ENCODE measurements at regions of chr13 and their contacts with region 1.

Region 1: GRCh38 chr13:27251166-27252091 is at the start of gene RPL21:
- DNase-seq: peak; percentile 85 to 95 (median 93)
- ATAC-seq: peak; percentile 95
- H3K4me3 ChIP-seq: peak within 1 kb of the TSS; percentile 82
- H3K4me3 Mint-ChIP-seq: peak within 1 kb of the TSS; percentile 93 to 99 (median 98)
- H3K27ac ChIP-seq: peak within 1 kb of the TSS; percentile 98
- H3K27ac Mint-ChIP-seq: peak within 1 kb of the TSS; percentile 98 to 100 (median 99)
- H3K4me1 ChIP-seq: peaks cover 29 to 35% of the 10 kb centered on the region in 2 donors
- H3K4me1 Mint-ChIP-seq: peaks cover 32 to 78% (median 49%) of the 10 kb centered on the region in 7 donors
- H3K27me3 ChIP-seq: no peaks in the 10 kb centered on the region
- H3K27me3 Mint-ChIP-seq: no peaks in the 10 kb centered on the region
- total RNA-seq, gene RPL21: 962 to 2,668 (median 2,384) TPM

Region 2: DNA sequence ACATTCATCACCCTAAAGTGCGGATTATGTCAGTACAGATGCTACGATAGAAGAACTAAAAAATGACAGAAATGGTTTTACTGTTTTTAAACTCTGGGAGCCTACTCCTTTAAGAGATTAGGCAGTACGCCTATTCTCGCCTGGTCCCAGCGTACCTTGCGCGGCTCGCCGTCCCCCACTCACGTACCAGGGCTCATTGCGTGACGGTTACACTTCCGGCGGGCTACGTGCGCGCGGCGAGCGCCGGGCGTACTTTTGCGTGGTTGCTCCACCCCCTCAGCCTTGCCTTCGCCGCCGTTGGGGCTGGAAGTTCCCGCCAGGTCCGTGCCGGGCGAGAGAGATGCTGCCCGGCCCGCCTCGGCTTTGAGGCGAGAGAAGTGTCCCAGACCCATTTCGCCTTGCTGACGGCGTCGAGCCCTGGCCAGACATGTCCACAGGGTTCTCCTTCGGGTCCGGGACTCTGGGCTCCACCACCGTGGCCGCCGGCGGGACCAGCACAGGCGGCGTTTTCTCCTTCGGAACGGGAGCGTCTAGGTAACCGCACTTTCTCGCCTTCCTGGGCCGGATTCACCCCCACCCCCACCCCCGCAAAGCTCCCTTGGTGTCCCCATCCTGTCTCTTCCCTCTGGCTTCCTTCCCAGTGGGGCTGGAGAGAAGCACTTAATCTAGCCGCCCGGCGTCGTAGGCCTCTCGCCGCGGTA is 1949.9 kb before region 1 on chr13 and contains the start of gene NUP58:
- CTCF ChIA-PET with region 1: no interaction called
- POLR2A ChIA-PET with region 1: no interaction called
- intact Hi-C with region 1: loop called in 1 of 2 experiments (anchors 10 kb)
- DNase-seq: peak; percentile 83 to 94 (median 92)
- ATAC-seq: peak; percentile 99
- H3K4me3 ChIP-seq: peak within 1 kb of the TSS; percentile 64
- H3K4me3 Mint-ChIP-seq: peak within 1 kb of the TSS; percentile 86 to 95 (median 92)
- H3K27ac ChIP-seq: peak within 1 kb of the TSS; percentile 93
- H3K27ac Mint-ChIP-seq: peak within 1 kb of the TSS; percentile 87 to 97 (median 93)
- H3K4me1 ChIP-seq: peaks cover 13 to 22% of the 10 kb centered on the region in 2 donors
- H3K4me1 Mint-ChIP-seq: peaks cover 21 to 51% (median 47%) of the 10 kb centered on the region in 7 donors
- H3K27me3 ChIP-seq: peaks cover 0 to 5% of the 10 kb centered on the region in 2 donors
- H3K27me3 Mint-ChIP-seq: peaks cover 7 to 19% (median 10%) of the 10 kb centered on the region in 5 donors
- total RNA-seq, gene NUP58: 41.1 to 89.1 (median 57.0) TPM

Region 3: GRCh38 chr13:26985285-26985878 is 266.0 kb before region 1 on chr13:
- CTCF ChIA-PET with region 1: no interaction called
- POLR2A ChIA-PET with region 1: no interaction called
- intact Hi-C with region 1: loop called in 1 of 2 experiments (anchors 2 kb)
- DNase-seq: peak; percentile 17 to 76 (median 65)
- ATAC-seq: peak; percentile 83
- H3K4me3 ChIP-seq: no peak overlapping the region
- H3K4me3 Mint-ChIP-seq: no peak overlapping the region
- H3K27ac ChIP-seq: no peak overlapping the region
- H3K27ac Mint-ChIP-seq: peak overlapping the region in 1 of 9 donors; percentile 46
- H3K4me1 ChIP-seq: no peaks in the 10 kb centered on the region
- H3K4me1 Mint-ChIP-seq: peaks cover 0 to 10% (median 0%) of the 10 kb centered on the region in 7 donors
- H3K27me3 ChIP-seq: no peaks in the 10 kb centered on the region
- H3K27me3 Mint-ChIP-seq: peaks cover 3 to 17% (median 11%) of the 10 kb centered on the region in 5 donors

Region 4: GRCh38 chr13:27270594-27271520 is 19.4 kb after region 1 on chr13 and contains the start of gene RASL11A:
- CTCF ChIA-PET with region 1: interaction called, 5 read pairs
- POLR2A ChIA-PET with region 1: interaction called, 8 read pairs
- intact Hi-C with region 1: loop called (anchors 1 kb)
- DNase-seq: peak; percentile 53 to 87 (median 76)
- ATAC-seq: peak; percentile 92
- H3K4me3 ChIP-seq: peak within 1 kb of the TSS; percentile 90
- H3K4me3 Mint-ChIP-seq: peak within 1 kb of the TSS; percentile 88 to 96 (median 92)
- H3K27ac ChIP-seq: peak within 1 kb of the TSS; percentile 75
- H3K27ac Mint-ChIP-seq: peak within 1 kb of the TSS; percentile 29 to 82 (median 75)
- H3K4me1 ChIP-seq: peaks cover 0 to 4% of the 10 kb centered on the region in 2 donors
- H3K4me1 Mint-ChIP-seq: peaks cover 9 to 35% (median 19%) of the 10 kb centered on the region in 7 donors
- H3K27me3 ChIP-seq: peaks cover 0 to 3% of the 10 kb centered on the region in 2 donors
- H3K27me3 Mint-ChIP-seq: peaks cover 0 to 45% (median 9%) of the 10 kb centered on the region in 5 donors
- total RNA-seq, gene RASL11A: 0.44 to 3.0 (median 0.86) TPM

Region 5: GRCh38 chr13:27339299-27339698 is 87.9 kb after region 1 on chr13:
- CTCF ChIA-PET with region 1: interaction called, 9 read pairs
- POLR2A ChIA-PET with region 1: interaction called, 3 read pairs
- intact Hi-C with region 1: loop called (anchors 1 to 5 kb)
- DNase-seq: peak in 7 of 9 donors; percentile 28 to 61 (median 51)
- ATAC-seq: peak; percentile 78
- H3K4me3 ChIP-seq: no peak overlapping the region
- H3K4me3 Mint-ChIP-seq: peak overlapping the region in 2 of 10 donors; percentile 29
- H3K27ac ChIP-seq: no peak overlapping the region
- H3K27ac Mint-ChIP-seq: no peak overlapping the region
- H3K4me1 ChIP-seq: no peaks in the 10 kb centered on the region
- H3K4me1 Mint-ChIP-seq: peaks cover 0 to 5% (median 0%) of the 10 kb centered on the region in 7 donors
- H3K27me3 ChIP-seq: no peaks in the 10 kb centered on the region
- H3K27me3 Mint-ChIP-seq: peaks cover 0 to 17% (median 4%) of the 10 kb centered on the region in 5 donors

Region 6: GRCh38 chr13:28658796-28659620 is 1407.6 kb after region 1 on chr13 and contains the start of gene POMP:
- CTCF ChIA-PET with region 1: no interaction called
- POLR2A ChIA-PET with region 1: no interaction called
- intact Hi-C with region 1: loop called in 1 of 2 experiments (anchors 5 kb)
- DNase-seq: peak; percentile 83 to 96 (median 93)
- ATAC-seq: peak; percentile 95
- H3K4me3 ChIP-seq: peak within 1 kb of the TSS; percentile 86
- H3K4me3 Mint-ChIP-seq: peak within 1 kb of the TSS; percentile 88 to 100 (median 98)
- H3K27ac ChIP-seq: peak within 1 kb of the TSS; percentile 96
- H3K27ac Mint-ChIP-seq: peak within 1 kb of the TSS; percentile 94 to 99 (median 99)
- H3K4me1 ChIP-seq: peaks cover 25 to 29% of the 10 kb centered on the region in 2 donors
- H3K4me1 Mint-ChIP-seq: peaks cover 38 to 84% (median 69%) of the 10 kb centered on the region in 7 donors
- H3K27me3 ChIP-seq: no peaks in the 10 kb centered on the region
- H3K27me3 Mint-ChIP-seq: no peaks in the 10 kb centered on the region
- total RNA-seq, gene POMP: 18.8 to 97.0 (median 21.2) TPM

Measured in naive thymus-derived CD4-positive, alpha-beta T cell (primary cell).